ENCODE measurements at regions of chr9 and their contacts with region 1.

Region 1: GRCh38 chr9:112061152-112061740 is 113.9 kb downstream of the SUSD1 start:
- DNase-seq: peak; percentile 91 to 97 (median 93)
- H3K4me3 ChIP-seq: no peak overlapping the region
- H3K4me3 Mint-ChIP-seq: no peak overlapping the region
- H3K27ac ChIP-seq: peak overlapping the region; percentile 75 to 86
- H3K27ac Mint-ChIP-seq: peak overlapping the region; percentile 87 to 95 (median 91)
- H3K4me1 ChIP-seq: peaks cover 19 to 25% of the 10 kb centered on the region in 2 donors
- H3K4me1 Mint-ChIP-seq: peaks cover 49% of the 10 kb centered on the region
- H3K27me3 ChIP-seq: no peaks in the 10 kb centered on the region
- H3K27me3 Mint-ChIP-seq: peaks cover 0 to 2% (median 0%) of the 10 kb centered on the region in 3 donors
- CTCF ChIP-seq: no peak

Region 2: GRCh38 chr9:112000743-112001142 is 60.5 kb before region 1 on chr9:
- intact Hi-C with region 1: no loop called
- DNase-seq: no peak
- H3K4me3 ChIP-seq: no peak overlapping the region
- H3K4me3 Mint-ChIP-seq: no peak overlapping the region
- H3K27ac ChIP-seq: no peak overlapping the region
- H3K27ac Mint-ChIP-seq: peak overlapping the region in 2 of 7 donors; percentile 49 to 77
- H3K4me1 ChIP-seq: peaks cover 3 to 5% of the 10 kb centered on the region in 2 donors
- H3K4me1 Mint-ChIP-seq: peaks cover 11% of the 10 kb centered on the region
- H3K27me3 ChIP-seq: no peaks in the 10 kb centered on the region
- H3K27me3 Mint-ChIP-seq: peaks cover 0 to 7% (median 0%) of the 10 kb centered on the region in 3 donors
- CTCF ChIP-seq: no peak

Region 3: GRCh38 chr9:112012026-112012902 is 49.0 kb before region 1 on chr9:
- intact Hi-C with region 1: loop called (anchors 2 to 5 kb)
- DNase-seq: peak; percentile 28 to 64 (median 38)
- H3K4me3 ChIP-seq: no peak overlapping the region
- H3K4me3 Mint-ChIP-seq: no peak overlapping the region
- H3K27ac ChIP-seq: peak overlapping the region; percentile 1 to 63
- H3K27ac Mint-ChIP-seq: peak overlapping the region; percentile 66 to 89 (median 80)
- H3K4me1 ChIP-seq: peaks cover 29 to 42% of the 10 kb centered on the region in 2 donors
- H3K4me1 Mint-ChIP-seq: peaks cover 54% of the 10 kb centered on the region
- H3K27me3 ChIP-seq: no peaks in the 10 kb centered on the region
- H3K27me3 Mint-ChIP-seq: peaks cover 2 to 13% (median 4%) of the 10 kb centered on the region in 3 donors
- CTCF ChIP-seq: no peak

Measured in CD14-positive monocyte (primary cell).